ENCODE measurements at regions of chr19 and their contacts with region 1.

Region 1: DNA sequence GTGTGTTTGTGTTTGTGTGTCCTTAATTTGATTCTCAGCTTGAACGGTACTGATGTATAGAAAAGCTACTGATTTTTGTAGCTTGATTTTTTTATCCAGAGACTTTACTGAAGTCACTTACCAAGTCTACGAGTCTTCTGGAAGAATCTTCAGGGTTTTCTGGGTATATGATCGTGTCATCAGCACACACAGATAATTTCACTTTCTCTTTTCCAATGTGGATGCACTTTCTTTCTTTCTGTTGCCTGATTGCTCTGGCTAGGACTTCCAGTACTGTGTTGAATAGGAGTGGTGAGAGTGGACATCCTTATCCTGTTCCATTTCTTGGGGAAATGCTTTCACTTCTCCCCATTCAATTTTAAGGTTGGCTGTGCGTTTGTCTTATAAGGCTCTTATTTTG is 7.9 kb upstream of the LILRB1 start:
- DNase-seq: no peak
- H3K4me3 ChIP-seq: no peak overlapping the region
- H3K27ac ChIP-seq: no peak overlapping the region
- H3K4me1 ChIP-seq: no peaks in the 10 kb centered on the region
- H3K27me3 ChIP-seq: no peaks in the 10 kb centered on the region
- CTCF ChIP-seq: no peak

Region 2: GRCh38 chr19:52809801-52810200 is 1812.6 kb before region 1 on chr19:
- intact Hi-C with region 1: loop called (anchors 10 kb)
- DNase-seq: no peak
- H3K4me3 ChIP-seq: no peak overlapping the region
- H3K27ac ChIP-seq: no peak overlapping the region
- H3K4me1 ChIP-seq: no peaks in the 10 kb centered on the region
- H3K27me3 ChIP-seq: no peaks in the 10 kb centered on the region
- CTCF ChIP-seq: no peak

Region 3: DNA sequence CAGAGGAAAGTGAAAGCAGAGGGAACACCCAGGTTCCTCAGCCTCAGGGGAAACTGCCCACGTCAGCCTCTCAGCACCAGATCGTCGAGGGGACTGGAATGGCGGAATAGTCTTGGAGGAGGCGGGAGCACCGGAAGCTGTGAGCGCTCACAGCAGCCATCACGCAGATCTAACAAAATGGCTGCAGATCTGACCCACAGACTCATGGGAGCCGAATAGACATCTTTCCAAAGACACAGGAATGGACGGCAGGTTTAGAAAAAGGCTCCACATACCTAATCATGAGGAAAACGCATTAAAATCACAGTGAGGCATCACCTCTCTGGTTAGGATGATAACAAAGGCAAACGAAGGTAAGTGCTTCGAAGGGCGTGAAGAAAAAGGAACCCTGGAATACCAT is 60.6 kb before region 1 on chr19:
- intact Hi-C with region 1: no loop called
- DNase-seq: no peak
- H3K4me3 ChIP-seq: no peak overlapping the region
- H3K27ac ChIP-seq: no peak overlapping the region
- H3K4me1 ChIP-seq: no peaks in the 10 kb centered on the region
- H3K27me3 ChIP-seq: no peaks in the 10 kb centered on the region
- CTCF ChIP-seq: no peak

Measured in tibial artery (tissue), 4 donors.